Ascending aorta (tissue), 2 donors: ENCODE measurements at regions of chr12 and their contacts with region 1.

Region 1: DNA sequence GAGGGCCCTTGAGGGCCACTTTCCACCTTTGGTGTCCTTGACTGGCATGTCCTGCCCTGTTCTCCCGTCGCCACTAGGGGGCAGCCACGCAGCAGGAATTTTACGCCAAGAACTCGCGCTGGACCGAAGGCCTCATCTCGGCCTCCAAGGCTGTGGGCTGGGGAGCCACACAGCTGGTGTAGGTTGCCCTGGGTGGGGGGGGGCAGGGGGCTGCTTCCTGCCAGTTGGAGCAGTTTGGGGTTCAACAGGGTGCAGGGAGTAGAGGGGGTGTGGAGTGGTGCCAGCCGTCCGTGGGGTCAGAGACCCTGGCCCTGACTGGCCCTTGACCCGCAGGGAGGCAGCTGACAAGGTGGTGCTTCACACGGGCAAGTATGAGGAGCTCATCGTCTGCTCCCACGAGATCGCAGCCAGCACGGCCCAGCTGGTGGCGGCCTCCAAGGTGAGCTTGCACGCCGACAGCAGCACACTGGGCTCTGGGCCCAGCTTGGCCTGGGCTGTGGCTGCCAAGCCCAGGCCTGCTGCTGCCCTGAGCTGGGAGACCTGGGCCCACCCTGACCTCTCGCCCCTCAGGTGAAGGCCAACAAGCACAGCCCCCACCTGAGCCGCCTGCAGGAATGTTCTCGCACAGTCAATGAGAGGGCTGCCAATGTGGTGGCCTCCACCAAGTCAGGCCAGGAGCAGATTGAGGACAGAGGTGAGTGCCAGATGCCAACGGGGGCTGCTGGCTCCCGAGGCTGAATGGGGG is 25.3 kb downstream of the HIP1R start:
- DNase-seq: peak in 1 of 2 donors; percentile 89
- H3K4me3 ChIP-seq: no peak overlapping the region
- H3K27ac ChIP-seq: peak overlapping the region; percentile 57 to 58
- H3K4me1 ChIP-seq: peaks cover 5% of the 10 kb centered on the region in 2 donors
- H3K27me3 ChIP-seq: no peaks in the 10 kb centered on the region
- CTCF ChIP-seq: peak; percentile 92 to 95 (median 94)

Region 2: GRCh38 chr12:122951979-122952892 is 91.7 kb after region 1 on chr12:
- intact Hi-C with region 1: loop called (anchors 1 kb)
- DNase-seq: peak in 1 of 2 donors; percentile 87
- H3K4me3 ChIP-seq: no peak overlapping the region
- H3K27ac ChIP-seq: no peak overlapping the region
- H3K4me1 ChIP-seq: peaks cover 0 to 3% of the 10 kb centered on the region in 2 donors
- H3K27me3 ChIP-seq: no peaks in the 10 kb centered on the region
- CTCF ChIP-seq: peak; percentile 83 to 93 (median 89)

Region 3: DNA sequence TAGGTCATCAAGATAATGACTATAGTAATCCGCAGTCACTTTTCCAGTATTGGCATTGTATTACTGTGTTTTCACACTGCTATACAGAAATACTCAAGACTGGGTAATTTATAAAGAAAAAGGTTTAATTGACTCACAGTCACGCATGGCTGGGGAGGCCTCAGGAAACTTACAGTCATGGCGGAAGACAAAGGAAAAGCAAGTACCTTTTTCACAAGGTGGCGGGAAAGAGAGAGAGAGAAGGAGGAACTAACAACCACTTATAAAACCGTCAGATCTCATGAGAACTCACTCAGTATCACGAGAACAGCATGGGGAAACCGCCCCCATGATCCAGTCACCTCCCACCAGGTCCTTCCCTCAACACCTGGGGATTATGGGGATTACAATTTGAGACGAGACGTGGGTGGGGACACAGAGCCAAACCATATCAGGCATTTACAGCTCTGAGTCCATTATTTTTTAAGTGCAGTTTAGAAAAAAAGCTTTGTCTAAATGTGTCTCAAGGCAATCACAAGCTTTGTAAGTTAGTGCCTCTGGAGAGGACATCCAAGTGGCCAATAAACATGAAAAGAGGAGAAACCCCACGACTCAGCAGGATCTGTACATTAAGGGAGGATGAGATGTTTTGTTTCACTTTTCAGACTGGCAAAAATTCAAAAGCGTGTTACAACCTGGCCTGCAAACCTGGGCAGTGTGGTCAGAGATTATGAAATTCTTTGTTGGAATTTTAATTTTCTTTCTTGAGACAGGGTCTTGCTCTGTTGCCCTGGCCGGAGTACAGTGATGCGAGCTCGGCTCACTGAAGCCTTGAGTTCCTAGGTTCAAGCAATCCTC is 983.6 kb after region 1 on chr12:
- intact Hi-C with region 1: no loop called
- DNase-seq: no peak
- H3K4me3 ChIP-seq: no peak overlapping the region
- H3K27ac ChIP-seq: no peak overlapping the region
- H3K4me1 ChIP-seq: no peaks in the 10 kb centered on the region
- H3K27me3 ChIP-seq: no peaks in the 10 kb centered on the region
- CTCF ChIP-seq: no peak